ENCODE measurements at regions of chr13 and their contacts with region 1.

Region 1: DNA sequence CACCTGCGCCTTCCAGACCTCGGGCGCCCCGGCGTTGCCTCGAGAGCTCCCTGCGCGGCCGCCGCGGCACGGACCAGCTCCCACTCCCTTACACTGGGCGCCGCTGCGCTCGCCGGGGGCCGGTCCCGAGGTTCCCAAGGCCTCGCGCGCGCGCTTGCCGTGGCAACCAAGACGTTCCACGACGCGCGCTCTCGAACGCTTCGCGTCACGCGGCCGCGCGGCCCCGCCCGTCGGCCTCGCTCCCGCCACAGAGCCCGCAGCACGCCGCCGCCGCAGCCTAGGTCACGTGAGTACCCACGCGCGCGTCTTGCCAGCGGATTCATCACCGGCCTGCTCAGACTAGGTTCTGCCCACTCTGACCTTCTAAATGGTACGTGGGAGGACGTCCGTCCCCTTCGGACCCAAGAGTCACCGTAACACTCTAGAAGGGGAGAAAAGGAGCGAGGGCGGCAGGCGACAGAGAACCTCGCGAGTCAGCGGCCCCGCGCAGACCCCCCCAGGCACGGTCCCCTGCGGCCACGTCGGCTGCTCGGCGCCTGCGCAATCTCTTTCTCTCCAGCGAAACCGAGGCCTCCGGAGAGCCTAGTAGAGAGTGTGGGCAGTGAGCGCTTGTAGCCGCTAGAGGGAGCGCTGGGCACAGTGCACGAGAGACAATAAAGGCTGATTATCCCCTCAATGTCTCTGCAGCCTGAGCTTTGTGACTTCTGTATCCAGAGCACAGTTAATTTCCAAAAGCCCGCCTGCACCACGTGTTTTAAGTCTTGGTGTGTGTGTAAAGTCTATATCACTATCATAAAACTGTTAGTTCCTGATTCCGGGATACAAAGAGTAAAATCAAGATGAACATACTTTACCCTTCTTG is at the start of gene SPART:
- DNase-seq: peak; percentile 81
- H3K4me3 ChIP-seq: peak within 1 kb of the TSS; percentile 69
- CTCF ChIP-seq: peak; percentile 97

Region 2: GRCh38 chr13:36261976-36262375 is 84.5 kb before region 1 on chr13:
- in situ Hi-C with region 1: loop called (anchors 5 kb)
- DNase-seq: no peak
- H3K4me3 ChIP-seq: no peak overlapping the region
- CTCF ChIP-seq: no peak

Region 3: GRCh38 chr13:36395280-36395679 is 48.8 kb after region 1 on chr13:
- in situ Hi-C with region 1: loop called (anchors 5 kb)
- DNase-seq: peak; percentile 50
- H3K4me3 ChIP-seq: no peak overlapping the region
- CTCF ChIP-seq: peak; percentile 57

Measured in astrocyte of the cerebellum (primary cell).